IMR-90 (cell line): ENCODE measurements at regions of chrX and their contacts with region 1.

Region 1: DNA sequence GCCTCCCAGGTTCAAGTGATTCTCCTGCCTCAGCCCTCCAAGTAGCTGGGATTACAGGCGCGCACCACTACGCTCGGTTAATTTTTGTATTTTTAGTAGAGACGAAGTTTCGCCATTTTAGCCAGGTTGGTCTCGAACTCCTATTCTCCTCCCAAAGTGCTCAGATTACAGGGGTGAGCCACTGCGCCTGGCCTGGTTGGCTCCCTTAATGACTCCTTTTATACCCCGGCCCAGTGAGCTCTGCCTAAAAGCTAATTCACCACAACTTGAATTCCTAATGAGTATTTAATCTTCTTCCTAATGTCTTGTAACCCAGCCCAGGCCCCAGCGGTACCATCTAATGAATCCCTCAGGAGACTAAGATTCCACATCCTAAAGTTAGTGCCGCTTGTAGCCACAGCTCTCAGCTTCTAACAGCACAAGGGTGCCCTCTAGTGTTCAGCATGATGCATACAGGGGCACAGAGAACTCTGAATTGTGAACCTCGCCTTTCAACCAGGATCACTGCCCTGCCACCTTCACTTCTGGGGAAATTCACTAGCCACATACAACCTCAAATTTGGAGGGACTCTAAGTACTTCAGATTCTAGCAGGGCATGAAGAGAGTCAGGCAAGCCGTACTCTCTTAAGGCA is 89.5 kb downstream of the OR13H1 start:
- DNase-seq: peak; percentile 41
- ATAC-seq: peak; percentile 94
- H3K4me3 ChIP-seq: no peak overlapping the region
- H3K27ac ChIP-seq: no peak overlapping the region
- H3K4me1 ChIP-seq: no peaks in the 10 kb centered on the region
- H3K27me3 ChIP-seq: no peaks in the 10 kb centered on the region; the same call in 1 of the 2 replicates
- CTCF ChIP-seq: peak; percentile 71
- POLR2A ChIP-seq: no peak
- RAD21 ChIP-seq: peak; percentile 72

Region 2: GRCh38 chrX:130539721-130540321 is 1093.6 kb before region 1 on chrX:
- CTCF ChIA-PET with region 1: no interaction called
- POLR2A ChIA-PET with region 1: no interaction called
- dilution Hi-C with region 1: no loop called
- in situ Hi-C with region 1: no loop called
- intact Hi-C with region 1: loop called (anchors 10 kb)
- DNase-seq: peak; percentile 45
- ATAC-seq: peak; percentile 51; the same call in 1 of the 2 replicates
- H3K4me3 ChIP-seq: no peak overlapping the region
- H3K27ac ChIP-seq: no peak overlapping the region
- H3K4me1 ChIP-seq: no peaks in the 10 kb centered on the region
- H3K27me3 ChIP-seq: peaks cover 4% of the 10 kb centered on the region
- CTCF ChIP-seq: peak; percentile 65
- POLR2A ChIP-seq: no peak
- RAD21 ChIP-seq: peak; percentile 51

Region 3: DNA sequence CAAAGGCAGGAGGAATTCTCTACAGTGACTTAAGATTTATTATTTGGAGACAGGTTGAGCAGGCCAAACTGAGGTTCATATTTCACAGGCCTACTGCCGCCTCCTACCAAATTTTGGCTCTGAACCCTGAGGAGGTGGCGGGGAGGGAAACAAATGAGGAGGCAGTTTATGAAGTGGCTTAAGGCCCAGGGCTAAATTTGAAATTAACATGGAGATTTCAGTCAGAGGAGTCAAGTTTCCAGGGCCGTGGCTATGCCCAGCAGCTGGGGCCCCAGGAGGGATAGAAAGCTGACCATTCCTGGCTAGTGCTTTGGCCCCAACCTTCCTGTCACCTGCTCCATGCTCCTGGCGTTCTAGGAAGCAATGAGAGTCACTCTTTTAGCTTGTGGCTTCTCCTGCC is 648.6 kb before region 1 on chrX:
- CTCF ChIA-PET with region 1: no interaction called
- POLR2A ChIA-PET with region 1: no interaction called
- dilution Hi-C with region 1: no loop called
- in situ Hi-C with region 1: loop called (anchors 10 kb)
- intact Hi-C with region 1: no loop called
- DNase-seq: no peak
- ATAC-seq: no peak
- H3K4me3 ChIP-seq: no peak overlapping the region
- H3K27ac ChIP-seq: no peak overlapping the region
- H3K4me1 ChIP-seq: no peaks in the 10 kb centered on the region
- H3K27me3 ChIP-seq: peaks cover 9% of the 10 kb centered on the region
- CTCF ChIP-seq: no peak
- POLR2A ChIP-seq: no peak
- RAD21 ChIP-seq: no peak

Region 4: GRCh38 chrX:131521824-131522223 is 111.6 kb before region 1 on chrX:
- CTCF ChIA-PET with region 1: no interaction called
- POLR2A ChIA-PET with region 1: no interaction called
- dilution Hi-C with region 1: no loop called
- in situ Hi-C with region 1: no loop called
- intact Hi-C with region 1: no loop called
- DNase-seq: no peak
- ATAC-seq: no peak
- H3K4me3 ChIP-seq: no peak overlapping the region
- H3K27ac ChIP-seq: no peak overlapping the region
- H3K4me1 ChIP-seq: no peaks in the 10 kb centered on the region
- H3K27me3 ChIP-seq: no peaks in the 10 kb centered on the region
- CTCF ChIP-seq: no peak
- POLR2A ChIP-seq: no peak
- RAD21 ChIP-seq: no peak

Region 5: GRCh38 chrX:131725001-131725654 is 91.7 kb after region 1 on chrX:
- CTCF ChIA-PET with region 1: no interaction called
- POLR2A ChIA-PET with region 1: no interaction called
- dilution Hi-C with region 1: no loop called
- in situ Hi-C with region 1: no loop called
- intact Hi-C with region 1: no loop called
- DNase-seq: no peak
- ATAC-seq: no peak
- H3K4me3 ChIP-seq: no peak overlapping the region
- H3K27ac ChIP-seq: no peak overlapping the region
- H3K4me1 ChIP-seq: no peaks in the 10 kb centered on the region
- H3K27me3 ChIP-seq: no peaks in the 10 kb centered on the region; the same call in 1 of the 2 replicates
- CTCF ChIP-seq: no peak
- POLR2A ChIP-seq: no peak
- RAD21 ChIP-seq: no peak

Region 6: DNA sequence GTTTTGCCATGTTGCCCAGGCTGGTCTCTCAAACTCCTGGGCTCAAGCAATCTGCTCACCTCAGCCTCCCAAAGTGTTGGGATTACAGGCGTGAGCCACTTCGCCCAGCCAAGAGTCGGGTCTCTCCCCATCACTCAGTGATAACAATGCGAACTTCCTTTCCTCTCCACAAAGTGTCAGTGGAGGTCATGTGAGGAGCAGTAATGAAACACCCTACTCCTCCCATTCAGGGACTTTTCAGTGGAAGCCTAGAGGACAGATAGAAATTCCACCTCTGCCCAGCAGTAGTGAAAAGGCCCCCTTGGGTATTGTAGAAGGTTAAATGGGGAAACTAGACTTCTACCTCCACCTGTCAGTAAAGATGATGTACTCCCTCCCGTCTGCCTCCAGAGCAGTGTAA is 247.8 kb after region 1 on chrX:
- CTCF ChIA-PET with region 1: no interaction called
- POLR2A ChIA-PET with region 1: no interaction called
- dilution Hi-C with region 1: no loop called
- in situ Hi-C with region 1: no loop called
- intact Hi-C with region 1: no loop called
- DNase-seq: no peak
- ATAC-seq: no peak
- H3K4me3 ChIP-seq: no peak overlapping the region
- H3K27ac ChIP-seq: no peak overlapping the region
- H3K4me1 ChIP-seq: no peaks in the 10 kb centered on the region
- H3K27me3 ChIP-seq: peaks cover 9% of the 10 kb centered on the region
- CTCF ChIP-seq: no peak
- POLR2A ChIP-seq: no peak
- RAD21 ChIP-seq: no peak